ENCODE measurements at regions of chr17 and their contacts with region 1.

Region 1: GRCh38 chr17:18937981-18938691 is 13.8 kb upstream of the SLC5A10 start:
- DNase-seq: no peak
- H3K4me3 Mint-ChIP-seq: no peak overlapping the region
- H3K27ac Mint-ChIP-seq: no peak overlapping the region
- H3K4me1 Mint-ChIP-seq: peaks cover 11% of the 10 kb centered on the region
- H3K27me3 Mint-ChIP-seq: no peaks in the 10 kb centered on the region
- CTCF ChIP-seq: no peak

Region 2: DNA sequence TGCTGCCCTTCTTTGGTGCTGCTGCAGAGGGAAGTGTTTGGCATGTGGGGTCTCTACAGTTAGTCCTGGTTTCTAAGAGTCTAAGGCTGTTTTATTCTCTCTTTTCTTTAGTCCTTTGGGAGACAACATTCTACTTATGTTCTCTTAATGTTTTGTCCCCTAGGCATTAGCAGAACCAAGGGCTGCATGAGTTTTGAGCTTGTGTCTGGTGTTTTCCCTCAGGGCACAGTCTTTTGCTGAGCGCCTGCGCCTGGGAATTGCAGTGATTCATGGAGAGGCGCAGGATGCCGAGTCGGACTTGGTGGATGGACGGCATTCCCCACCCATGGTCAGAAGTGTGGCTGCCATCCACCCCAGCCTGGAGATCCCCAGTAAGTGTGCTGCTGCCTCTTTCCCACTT is 27.3 kb before region 1 on chr17:
- CTCF ChIA-PET with region 1: no interaction called
- intact Hi-C with region 1: no loop called
- DNase-seq: no peak
- H3K4me3 Mint-ChIP-seq: no peak overlapping the region
- H3K27ac Mint-ChIP-seq: no peak overlapping the region
- H3K4me1 Mint-ChIP-seq: no peaks in the 10 kb centered on the region
- H3K27me3 Mint-ChIP-seq: no peaks in the 10 kb centered on the region
- CTCF ChIP-seq: no peak

Region 3: GRCh38 chr17:18950944-18951349 is 12.8 kb after region 1 on chr17:
- CTCF ChIA-PET with region 1: interaction called, 6 read pairs
- intact Hi-C with region 1: loop called (anchors 1 kb)
- DNase-seq: peak; percentile 69
- H3K4me3 Mint-ChIP-seq: no peak overlapping the region
- H3K27ac Mint-ChIP-seq: no peak overlapping the region
- H3K4me1 Mint-ChIP-seq: peaks cover 18% of the 10 kb centered on the region
- H3K27me3 Mint-ChIP-seq: peaks cover 8% of the 10 kb centered on the region
- CTCF ChIP-seq: no peak

Region 4: GRCh38 chr17:18974407-18975132 is 36.4 kb after region 1 on chr17:
- CTCF ChIA-PET with region 1: no interaction called
- intact Hi-C with region 1: no loop called
- DNase-seq: no peak
- H3K4me3 Mint-ChIP-seq: no peak overlapping the region
- H3K27ac Mint-ChIP-seq: no peak overlapping the region
- H3K4me1 Mint-ChIP-seq: peaks cover 10% of the 10 kb centered on the region
- H3K27me3 Mint-ChIP-seq: no peaks in the 10 kb centered on the region
- CTCF ChIP-seq: no peak

Measured in Calu3 (cell line).